Activated naive CD4-positive, alpha-beta T cell treated with anti-CD3 and anti-CD28 coated beads for 36 hours (primary cell): ENCODE measurements at regions of chr19 and their contacts with region 1.

Region 1: DNA sequence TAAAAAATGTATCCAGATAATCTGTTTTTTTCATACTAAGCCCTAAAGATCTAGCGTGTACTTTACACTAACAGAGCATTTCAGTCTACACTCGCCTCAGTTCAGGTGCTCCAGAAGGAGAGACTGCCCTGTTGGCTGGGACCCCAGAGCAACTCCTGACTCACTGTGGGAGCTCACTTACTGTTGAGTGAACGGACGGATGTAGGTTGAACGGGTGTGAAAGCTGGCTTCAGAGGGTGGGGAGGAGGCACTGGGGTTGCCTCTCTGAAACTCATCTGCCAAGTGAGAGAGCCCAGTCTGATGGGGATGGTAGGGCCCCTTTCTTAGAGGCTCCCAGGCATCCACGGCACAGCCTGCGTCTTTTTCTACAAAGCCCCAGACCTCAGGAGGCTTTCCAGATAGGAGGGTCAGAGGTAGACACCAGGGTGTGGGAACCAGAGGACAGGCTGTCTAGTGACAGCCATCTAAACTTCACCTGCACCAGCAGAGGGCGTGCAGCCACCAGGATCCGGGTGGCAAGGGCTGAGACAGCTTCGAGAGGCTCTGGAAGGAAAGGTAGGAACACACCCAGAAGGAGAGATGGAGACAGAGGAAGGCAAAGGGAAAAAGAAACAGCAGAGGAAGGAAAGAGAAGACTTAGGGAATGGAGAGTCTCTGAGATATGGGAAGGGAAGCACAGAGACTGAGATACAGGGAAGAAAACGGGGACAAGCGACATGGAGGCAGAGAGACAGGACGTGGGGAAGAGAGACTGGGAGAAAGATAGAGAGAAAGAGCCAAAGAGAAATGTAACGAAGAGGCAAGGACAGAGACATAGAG is 3.7 kb downstream of the KASH5 start:
- DNase-seq: peak; percentile 88
- H3K4me3 Mint-ChIP-seq: no peak overlapping the region
- H3K27ac Mint-ChIP-seq: no peak overlapping the region
- H3K4me1 Mint-ChIP-seq: peaks cover 15% of the 10 kb centered on the region
- H3K27me3 Mint-ChIP-seq: peaks cover 3% of the 10 kb centered on the region

Region 2: DNA sequence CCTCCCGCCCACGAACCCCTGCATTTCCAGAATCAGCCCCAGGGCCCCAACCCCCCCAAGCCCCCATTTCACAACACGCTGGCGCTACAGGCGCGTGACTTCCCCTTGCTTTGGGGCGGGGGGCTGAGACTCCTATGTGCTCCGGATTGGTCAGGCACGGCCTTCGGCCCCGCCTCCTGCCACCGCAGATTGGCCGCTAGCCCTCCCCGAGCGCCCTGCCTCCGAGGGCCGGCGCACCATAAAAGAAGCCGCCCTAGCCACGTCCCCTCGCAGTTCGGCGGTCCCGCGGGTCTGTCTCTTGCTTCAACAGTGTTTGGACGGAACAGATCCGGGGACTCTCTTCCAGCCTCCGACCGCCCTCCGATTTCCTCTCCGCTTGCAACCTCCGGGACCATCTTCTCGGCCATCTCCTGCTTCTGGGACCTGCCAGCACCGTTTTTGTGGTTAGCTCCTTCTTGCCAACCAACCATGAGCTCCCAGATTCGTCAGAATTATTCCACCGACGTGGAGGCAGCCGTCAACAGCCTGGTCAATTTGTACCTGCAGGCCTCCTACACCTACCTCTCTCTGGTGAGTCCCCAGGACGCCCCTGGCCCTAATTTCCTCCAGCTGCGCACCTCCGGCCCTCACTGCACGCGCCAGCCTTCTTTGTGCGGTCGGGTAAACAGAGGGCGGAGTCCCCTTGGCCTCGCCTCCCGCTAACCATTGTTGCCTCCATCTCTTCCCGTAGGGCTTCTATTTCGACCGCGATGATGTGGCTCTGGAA is 426.6 kb before region 1 on chr19 and contains the start of gene FTL:
- CTCF ChIA-PET with region 1: no interaction called
- intact Hi-C with region 1: no loop called
- DNase-seq: peak; percentile 93
- H3K4me3 Mint-ChIP-seq: peak within 1 kb of the TSS; percentile 100
- H3K27ac Mint-ChIP-seq: peak within 1 kb of the TSS; percentile 97
- H3K4me1 Mint-ChIP-seq: peaks cover 56% of the 10 kb centered on the region
- H3K27me3 Mint-ChIP-seq: no peaks in the 10 kb centered on the region
- total RNA-seq, gene FTL: 1,093 to 1,120 TPM

Region 3: GRCh38 chr19:49231389-49231788 is 160.4 kb before region 1 on chr19:
- CTCF ChIA-PET with region 1: no interaction called
- intact Hi-C with region 1: no loop called
- DNase-seq: peak; percentile 54
- H3K4me3 Mint-ChIP-seq: no peak overlapping the region
- H3K27ac Mint-ChIP-seq: peak overlapping the region; percentile 18
- H3K4me1 Mint-ChIP-seq: peaks cover 13% of the 10 kb centered on the region
- H3K27me3 Mint-ChIP-seq: no peaks in the 10 kb centered on the region

Region 4: GRCh38 chr19:49331616-49332055 is 60.2 kb before region 1 on chr19:
- CTCF ChIA-PET with region 1: no interaction called
- intact Hi-C with region 1: loop called (anchors 2 kb)
- DNase-seq: peak; percentile 84
- H3K4me3 Mint-ChIP-seq: peak overlapping the region; percentile 44
- H3K27ac Mint-ChIP-seq: peak overlapping the region; percentile 81
- H3K4me1 Mint-ChIP-seq: peaks cover 74% of the 10 kb centered on the region
- H3K27me3 Mint-ChIP-seq: no peaks in the 10 kb centered on the region

Region 5: GRCh38 chr19:49421039-49421877 is 29.5 kb after region 1 on chr19:
- CTCF ChIA-PET with region 1: interaction called, 3 read pairs
- intact Hi-C with region 1: loop called (anchors 2 kb)
- DNase-seq: peak; percentile 60
- H3K4me3 Mint-ChIP-seq: peak overlapping the region; percentile 31
- H3K27ac Mint-ChIP-seq: no peak overlapping the region
- H3K4me1 Mint-ChIP-seq: peaks cover 33% of the 10 kb centered on the region
- H3K27me3 Mint-ChIP-seq: peaks cover 58% of the 10 kb centered on the region

Region 6: GRCh38 chr19:49430678-49431329 is 39.0 kb after region 1 on chr19:
- CTCF ChIA-PET with region 1: interaction called, 6 read pairs
- intact Hi-C with region 1: loop called (anchors 2 kb)
- DNase-seq: peak; percentile 56
- H3K4me3 Mint-ChIP-seq: no peak overlapping the region
- H3K27ac Mint-ChIP-seq: no peak overlapping the region
- H3K4me1 Mint-ChIP-seq: peaks cover 45% of the 10 kb centered on the region
- H3K27me3 Mint-ChIP-seq: peaks cover 89% of the 10 kb centered on the region

Region 7: GRCh38 chr19:49443366-49444099 is 51.7 kb after region 1 on chr19:
- CTCF ChIA-PET with region 1: interaction called, 12 read pairs
- intact Hi-C with region 1: loop called (anchors 1 kb)
- DNase-seq: peak; percentile 96
- H3K4me3 Mint-ChIP-seq: peak overlapping the region; percentile 75
- H3K27ac Mint-ChIP-seq: peak overlapping the region; percentile 72
- H3K4me1 Mint-ChIP-seq: peaks cover 23% of the 10 kb centered on the region
- H3K27me3 Mint-ChIP-seq: peaks cover 38% of the 10 kb centered on the region

Region 8: GRCh38 chr19:49468746-49469447 is 77.1 kb after region 1 on chr19:
- CTCF ChIA-PET with region 1: interaction called, 18 read pairs
- intact Hi-C with region 1: loop called (anchors 1 kb)
- DNase-seq: peak; percentile 90
- H3K4me3 Mint-ChIP-seq: peak overlapping the region; percentile 43
- H3K27ac Mint-ChIP-seq: peak overlapping the region; percentile 96
- H3K4me1 Mint-ChIP-seq: peaks cover 48% of the 10 kb centered on the region
- H3K27me3 Mint-ChIP-seq: no peaks in the 10 kb centered on the region